Psoas muscle (tissue), 8 donors: ENCODE measurements at regions of chr4 and their contacts with region 1.

Region 1: GRCh38 chr4:68569466-68570121 is 6.5 kb downstream of the UGT2B17 start:
- DNase-seq: no peak
- ATAC-seq: no peak
- H3K4me3 ChIP-seq: no peak overlapping the region
- H3K27ac ChIP-seq: no peak overlapping the region
- H3K4me1 ChIP-seq: no peaks in the 10 kb centered on the region
- H3K27me3 ChIP-seq: no peaks in the 10 kb centered on the region
- CTCF ChIP-seq: no peak

Region 2: GRCh38 chr4:68673143-68673542 is 103.5 kb after region 1 on chr4:
- intact Hi-C with region 1: loop called in 1 of 2 experiments (anchors 5 kb)
- DNase-seq: no peak
- ATAC-seq: no peak
- H3K4me3 ChIP-seq: no peak overlapping the region
- H3K27ac ChIP-seq: no peak overlapping the region
- H3K4me1 ChIP-seq: no peaks in the 10 kb centered on the region
- H3K27me3 ChIP-seq: no peaks in the 10 kb centered on the region
- CTCF ChIP-seq: no peak